ENCODE measurements at regions of chr11 and their contacts with region 1.

Region 1: DNA sequence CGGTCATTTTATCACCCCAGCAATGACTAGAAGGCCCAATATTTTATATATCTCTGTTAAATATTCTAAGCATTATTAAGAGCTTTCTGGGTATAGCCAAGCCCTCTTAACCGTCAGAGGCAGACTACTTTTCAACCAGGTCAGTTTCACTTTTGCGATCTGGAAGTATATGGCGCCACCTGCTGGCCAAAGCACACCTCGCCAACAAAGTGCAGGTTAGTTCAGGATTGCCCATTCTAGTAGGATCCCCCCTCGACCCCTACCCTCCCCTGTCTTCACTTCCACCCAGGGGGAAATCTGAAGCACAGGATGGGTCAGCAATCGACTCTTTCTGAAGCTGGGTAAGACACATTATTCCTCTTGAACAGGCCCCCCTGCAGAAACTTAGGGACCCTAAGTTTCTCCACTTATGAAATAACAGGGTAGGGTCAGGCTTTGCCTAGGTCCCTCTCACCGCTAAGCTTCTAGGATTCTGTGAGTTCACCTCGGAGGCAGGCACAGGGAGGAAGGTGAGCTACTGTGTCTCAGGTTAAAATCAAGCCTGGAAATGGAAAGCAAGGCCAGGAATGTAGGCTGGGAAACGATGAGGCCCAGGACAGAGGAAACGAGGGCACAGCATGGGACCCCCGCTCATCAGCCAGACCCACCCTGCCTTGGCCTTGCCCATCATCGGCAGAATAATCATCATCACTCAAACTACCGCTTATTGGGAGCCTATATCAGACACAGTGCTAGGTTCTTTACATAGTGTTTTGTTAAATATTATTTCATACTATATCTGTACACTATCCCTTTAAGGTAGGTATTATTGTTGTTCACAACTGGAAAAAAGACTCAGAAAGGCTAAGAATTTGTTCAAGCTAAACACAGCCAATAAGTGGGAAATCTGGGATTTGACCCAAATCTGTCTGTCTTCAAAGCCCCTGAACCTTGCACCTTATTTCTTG is 35.6 kb downstream of the KCNJ1 start:
- DNase-seq: peak; percentile 87
- H3K4me3 ChIP-seq: no peak overlapping the region
- H3K27ac ChIP-seq: peak overlapping the region; percentile 47
- H3K4me1 ChIP-seq: peaks cover 65% of the 10 kb centered on the region
- H3K27me3 ChIP-seq: no peaks in the 10 kb centered on the region
- CTCF ChIP-seq: peak; percentile 81 to 84
- POLR2A ChIP-seq: no peak

Region 2: GRCh38 chr11:128172046-128172878 is 659.2 kb before region 1 on chr11:
- CTCF ChIA-PET with region 1: interaction called, 38 read pairs
- POLR2A ChIA-PET with region 1: no interaction called
- dilution Hi-C with region 1: no loop called
- intact Hi-C with region 1: loop called (anchors 1 kb)
- DNase-seq: peak; percentile 91
- H3K4me3 ChIP-seq: no peak overlapping the region
- H3K27ac ChIP-seq: peak overlapping the region; percentile 42
- H3K4me1 ChIP-seq: peaks cover 9% of the 10 kb centered on the region
- H3K27me3 ChIP-seq: no peaks in the 10 kb centered on the region
- CTCF ChIP-seq: peak; percentile 64 to 74
- POLR2A ChIP-seq: no peak

Region 3: GRCh38 chr11:128522055-128522942 is 309.1 kb before region 1 on chr11:
- CTCF ChIA-PET with region 1: interaction called, 3 read pairs
- POLR2A ChIA-PET with region 1: no interaction called
- dilution Hi-C with region 1: no loop called
- intact Hi-C with region 1: loop called (anchors 1 kb)
- DNase-seq: peak; percentile 97
- H3K4me3 ChIP-seq: peak overlapping the region; percentile 68 to 98 (median 97)
- H3K27ac ChIP-seq: peak overlapping the region; percentile 99
- H3K4me1 ChIP-seq: peaks cover 52% of the 10 kb centered on the region
- H3K27me3 ChIP-seq: no peaks in the 10 kb centered on the region
- CTCF ChIP-seq: no peak
- POLR2A ChIP-seq: peak; percentile 69

Region 4: DNA sequence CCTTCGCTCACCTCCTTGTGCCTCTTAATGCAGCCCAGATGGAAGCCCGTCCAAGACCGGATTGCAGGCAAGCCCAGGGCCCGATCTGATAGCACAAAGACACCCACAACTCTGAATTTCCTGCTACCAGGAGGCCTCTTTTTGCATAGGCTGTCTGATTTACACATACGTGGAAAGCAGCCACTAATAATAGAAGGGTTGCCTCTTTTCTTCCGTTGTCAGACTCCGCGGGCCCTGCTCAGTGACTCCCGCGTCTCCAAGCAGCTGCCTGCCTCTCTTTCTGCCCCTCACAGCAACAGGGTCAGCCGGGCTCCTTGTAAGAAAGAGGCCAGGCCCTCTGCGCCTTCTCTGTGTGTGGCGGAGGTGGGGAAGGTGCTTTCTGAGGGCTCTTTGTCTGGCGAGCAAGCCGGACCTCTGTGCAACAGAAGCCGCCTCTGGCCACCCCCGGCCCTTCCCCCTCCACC is 110.9 kb before region 1 on chr11:
- CTCF ChIA-PET with region 1: interaction called, 6 read pairs
- POLR2A ChIA-PET with region 1: no interaction called
- dilution Hi-C with region 1: no loop called
- intact Hi-C with region 1: loop called (anchors 1 kb)
- DNase-seq: peak; percentile 58
- H3K4me3 ChIP-seq: no peak overlapping the region
- H3K27ac ChIP-seq: peak overlapping the region; percentile 51
- H3K4me1 ChIP-seq: peaks cover 61% of the 10 kb centered on the region
- H3K27me3 ChIP-seq: no peaks in the 10 kb centered on the region
- CTCF ChIP-seq: no peak
- POLR2A ChIP-seq: no peak

Region 5: GRCh38 chr11:128733440-128734102 is 97.9 kb before region 1 on chr11:
- CTCF ChIA-PET with region 1: no interaction called
- POLR2A ChIA-PET with region 1: no interaction called
- dilution Hi-C with region 1: no loop called
- intact Hi-C with region 1: no loop called
- DNase-seq: peak; percentile 37
- H3K4me3 ChIP-seq: no peak overlapping the region
- H3K27ac ChIP-seq: no peak overlapping the region
- H3K4me1 ChIP-seq: peaks cover 48% of the 10 kb centered on the region
- H3K27me3 ChIP-seq: no peaks in the 10 kb centered on the region
- CTCF ChIP-seq: no peak
- POLR2A ChIP-seq: no peak

Region 6: DNA sequence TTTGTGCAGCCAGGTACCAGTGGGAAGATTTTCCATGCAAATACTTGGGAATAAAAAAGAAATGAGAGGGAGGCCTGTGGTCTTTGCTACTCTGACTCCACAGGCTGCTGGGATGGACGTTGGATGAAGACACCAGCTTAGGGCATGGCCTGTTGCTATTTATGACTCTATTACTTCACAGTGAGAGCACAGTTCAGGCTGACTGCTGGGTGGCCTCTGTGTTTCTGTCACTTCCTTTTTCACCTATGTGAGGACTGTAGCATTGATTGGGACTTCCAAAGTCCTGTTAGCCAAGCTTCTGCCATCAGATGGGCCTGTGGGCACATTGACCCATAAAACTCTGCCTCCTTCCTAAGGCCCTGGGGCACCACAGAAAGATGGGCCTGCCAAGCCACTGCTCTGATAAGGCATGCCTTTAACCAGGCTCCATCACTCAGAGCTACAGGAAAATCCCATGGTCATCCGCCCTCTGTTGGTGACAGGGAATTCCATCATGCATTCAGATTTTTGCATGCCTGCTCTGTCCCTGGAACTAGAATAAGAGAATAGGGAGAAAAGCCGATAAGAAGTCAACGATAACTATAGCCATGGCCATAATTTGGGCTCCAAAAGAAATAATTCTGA is 29.0 kb before region 1 on chr11:
- CTCF ChIA-PET with region 1: interaction called, 13 read pairs
- POLR2A ChIA-PET with region 1: no interaction called
- dilution Hi-C with region 1: no loop called
- intact Hi-C with region 1: loop called (anchors 1 kb)
- DNase-seq: peak; percentile 36
- H3K4me3 ChIP-seq: no peak overlapping the region
- H3K27ac ChIP-seq: no peak overlapping the region
- H3K4me1 ChIP-seq: no peaks in the 10 kb centered on the region
- H3K27me3 ChIP-seq: no peaks in the 10 kb centered on the region
- CTCF ChIP-seq: peak; percentile 43 to 44
- POLR2A ChIP-seq: no peak

Region 7: DNA sequence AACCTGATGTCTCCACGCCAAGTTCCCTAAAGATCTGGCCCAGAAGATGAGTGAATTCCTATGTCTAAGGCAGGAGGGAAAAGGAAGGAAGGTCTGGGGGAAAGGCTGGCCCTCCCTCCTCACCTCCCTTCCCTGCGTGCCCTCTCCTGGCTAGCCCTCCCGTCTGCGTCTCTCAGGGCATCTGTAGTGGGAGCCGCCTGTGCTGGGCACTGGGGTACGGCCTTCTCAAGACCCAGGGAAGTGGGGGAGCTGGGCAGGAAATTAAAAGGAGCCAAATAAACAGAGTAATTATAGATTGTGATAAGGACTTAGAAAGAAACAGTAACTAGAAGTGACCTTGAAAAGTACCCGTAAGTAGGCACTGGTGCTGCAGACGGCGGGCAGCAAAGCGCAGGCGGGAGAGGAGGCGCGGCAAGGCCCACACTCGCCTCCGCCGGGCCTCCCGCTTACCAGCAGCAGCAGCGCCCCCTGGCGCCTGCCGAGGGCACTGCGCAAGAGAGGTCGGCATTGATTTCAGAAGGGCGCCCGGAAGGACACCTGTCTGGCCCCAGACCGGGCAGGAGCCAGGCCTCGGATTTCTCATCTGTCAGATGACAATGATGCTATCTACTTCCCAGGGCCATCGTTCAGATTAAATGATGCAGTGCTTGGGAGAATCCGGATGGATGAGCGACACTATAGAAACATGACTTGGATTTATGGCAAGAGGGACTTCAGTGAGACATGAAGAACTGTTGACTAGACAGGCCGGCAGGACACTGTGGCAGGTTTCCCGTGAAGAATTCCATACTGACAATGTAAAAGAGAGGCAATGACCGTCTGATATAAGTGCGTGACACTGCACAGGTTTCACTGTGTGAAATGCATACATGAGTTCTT is 28.4 kb after region 1 on chr11:
- CTCF ChIA-PET with region 1: interaction called, 10 read pairs
- POLR2A ChIA-PET with region 1: no interaction called
- dilution Hi-C with region 1: no loop called
- intact Hi-C with region 1: loop called (anchors 1 kb)
- DNase-seq: peak; percentile 74
- H3K4me3 ChIP-seq: no peak overlapping the region
- H3K27ac ChIP-seq: no peak overlapping the region
- H3K4me1 ChIP-seq: peaks cover 2% of the 10 kb centered on the region
- H3K27me3 ChIP-seq: no peaks in the 10 kb centered on the region
- CTCF ChIP-seq: peak; percentile 97 to 99
- POLR2A ChIP-seq: no peak

Region 8: GRCh38 chr11:129557421-129557820 is 726.0 kb after region 1 on chr11:
- CTCF ChIA-PET with region 1: no interaction called
- POLR2A ChIA-PET with region 1: no interaction called
- dilution Hi-C with region 1: no loop called
- intact Hi-C with region 1: no loop called
- DNase-seq: no peak
- H3K4me3 ChIP-seq: no peak overlapping the region
- H3K27ac ChIP-seq: no peak overlapping the region
- H3K4me1 ChIP-seq: no peaks in the 10 kb centered on the region
- H3K27me3 ChIP-seq: no peaks in the 10 kb centered on the region
- CTCF ChIP-seq: no peak
- POLR2A ChIP-seq: no peak

Measured in endothelial cell of umbilical vein (primary cell).